Panc1 (cell line): ENCODE measurements at regions of chr15 and their contacts with region 1.

Region 1: DNA sequence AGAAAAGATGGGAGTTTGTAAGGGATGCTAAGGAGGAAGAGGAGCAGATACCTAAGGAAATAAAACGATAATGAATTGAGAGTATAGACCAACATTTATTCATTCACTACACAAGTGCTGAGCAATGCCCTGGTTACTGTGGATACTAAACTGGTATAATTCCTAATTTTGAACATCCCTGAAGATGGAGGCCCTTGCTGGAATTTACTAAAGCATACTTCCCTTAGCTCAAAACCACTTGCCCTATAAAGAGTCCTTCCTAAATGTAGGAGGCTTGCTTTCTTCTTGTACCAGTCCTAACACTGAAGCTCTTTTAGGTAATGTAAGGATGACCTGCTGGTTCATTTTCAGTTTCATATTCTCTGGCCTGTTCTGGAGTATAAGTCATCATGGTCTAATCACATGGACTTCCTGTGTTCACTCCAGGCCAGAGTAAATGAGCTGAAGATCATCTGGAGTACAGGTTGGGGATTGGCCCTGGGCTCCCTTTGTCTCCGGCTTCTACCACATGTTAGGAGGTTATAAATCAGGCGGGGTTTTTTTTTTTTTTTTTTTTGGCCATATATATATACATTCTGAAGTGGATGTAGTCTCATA is 40.1 kb upstream of the MTMR10 start:
- DNase-seq: no peak
- ATAC-seq: no peak
- H3K4me3 ChIP-seq: no peak overlapping the region
- H3K27ac ChIP-seq: no peak overlapping the region
- H3K4me1 ChIP-seq: no peaks in the 10 kb centered on the region
- H3K27me3 ChIP-seq: no peaks in the 10 kb centered on the region
- CTCF ChIP-seq: no peak

Region 2: GRCh38 chr15:30973379-30973778 is 58.2 kb before region 1 on chr15:
- CTCF ChIA-PET with region 1: no interaction called
- POLR2A ChIA-PET with region 1: interaction called, 11 read pairs
- in situ Hi-C with region 1: no loop called
- intact Hi-C with region 1: no loop called
- DNase-seq: no peak
- ATAC-seq: no peak
- H3K4me3 ChIP-seq: no peak overlapping the region
- H3K27ac ChIP-seq: no peak overlapping the region
- H3K4me1 ChIP-seq: no peaks in the 10 kb centered on the region
- H3K27me3 ChIP-seq: no peaks in the 10 kb centered on the region
- CTCF ChIP-seq: no peak

Region 3: GRCh38 chr15:31062310-31062847 is 30.8 kb after region 1 on chr15:
- CTCF ChIA-PET with region 1: no interaction called
- POLR2A ChIA-PET with region 1: no interaction called
- in situ Hi-C with region 1: no loop called
- intact Hi-C with region 1: no loop called
- DNase-seq: no peak
- ATAC-seq: no peak
- H3K4me3 ChIP-seq: no peak overlapping the region
- H3K27ac ChIP-seq: no peak overlapping the region
- H3K4me1 ChIP-seq: no peaks in the 10 kb centered on the region
- H3K27me3 ChIP-seq: no peaks in the 10 kb centered on the region
- CTCF ChIP-seq: no peak